ENCODE measurements at regions of chr17 and their contacts with region 1.

Region 1: GRCh38 chr17:35747540-35748017 is 5.5 kb downstream of the GAS2L2 start:
- DNase-seq: peak; percentile 79
- H3K4me3 ChIP-seq: no peak overlapping the region
- H3K27ac ChIP-seq: no peak overlapping the region
- H3K4me1 ChIP-seq: no peaks in the 10 kb centered on the region
- CTCF ChIP-seq: peak; percentile 90

Region 2: DNA sequence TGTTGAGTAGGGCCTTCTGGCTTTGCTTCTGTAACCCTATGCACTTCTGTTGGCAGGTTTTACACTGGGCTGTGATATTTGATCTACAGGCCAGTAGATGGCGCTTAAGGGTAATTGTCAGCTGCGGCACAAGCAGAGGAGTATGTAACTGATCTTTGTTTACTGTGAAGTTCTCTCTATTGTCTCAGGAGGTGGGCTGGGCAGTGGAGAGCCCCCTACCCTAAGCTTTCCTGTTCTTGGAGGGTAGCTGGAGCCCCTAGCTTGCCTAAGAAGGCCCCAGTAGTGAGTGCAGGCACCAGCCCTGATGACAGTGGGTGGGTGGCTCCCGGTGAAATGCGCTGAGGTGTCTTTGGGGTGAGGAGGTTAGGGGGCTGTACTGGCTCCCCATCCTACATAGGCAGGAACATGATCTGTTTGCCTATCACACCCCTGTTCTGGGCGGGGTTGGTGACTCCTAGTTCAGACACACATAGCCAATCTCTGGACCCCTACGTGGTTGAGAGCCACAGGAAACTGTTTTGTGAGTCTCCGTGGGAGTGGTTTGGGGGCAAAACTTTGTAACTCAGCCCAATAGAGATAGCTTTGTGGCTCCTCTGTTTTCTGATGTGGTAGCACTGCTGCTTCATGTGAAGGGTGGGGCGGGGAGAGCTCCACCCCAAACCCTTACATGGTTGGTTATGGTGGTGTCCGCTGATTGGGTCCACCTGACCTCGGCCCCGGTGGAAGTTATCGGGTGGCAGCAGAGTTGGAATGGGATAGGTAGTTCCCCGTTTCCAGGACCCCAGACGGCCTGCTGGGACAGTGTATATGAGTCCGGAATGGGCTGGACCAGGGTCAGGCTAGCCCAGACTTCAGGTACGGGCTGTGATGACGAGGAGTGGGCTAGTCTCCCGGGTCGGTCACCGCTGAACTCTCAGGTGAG is 434.5 kb before region 1 on chr17:
- CTCF ChIA-PET with region 1: no interaction called
- POLR2A ChIA-PET with region 1: no interaction called
- intact Hi-C with region 1: loop called (anchors 2 kb)
- DNase-seq: peak; percentile 66
- H3K4me3 ChIP-seq: no peak overlapping the region
- H3K27ac ChIP-seq: no peak overlapping the region
- H3K4me1 ChIP-seq: no peaks in the 10 kb centered on the region
- CTCF ChIP-seq: peak; percentile 90

Region 3: DNA sequence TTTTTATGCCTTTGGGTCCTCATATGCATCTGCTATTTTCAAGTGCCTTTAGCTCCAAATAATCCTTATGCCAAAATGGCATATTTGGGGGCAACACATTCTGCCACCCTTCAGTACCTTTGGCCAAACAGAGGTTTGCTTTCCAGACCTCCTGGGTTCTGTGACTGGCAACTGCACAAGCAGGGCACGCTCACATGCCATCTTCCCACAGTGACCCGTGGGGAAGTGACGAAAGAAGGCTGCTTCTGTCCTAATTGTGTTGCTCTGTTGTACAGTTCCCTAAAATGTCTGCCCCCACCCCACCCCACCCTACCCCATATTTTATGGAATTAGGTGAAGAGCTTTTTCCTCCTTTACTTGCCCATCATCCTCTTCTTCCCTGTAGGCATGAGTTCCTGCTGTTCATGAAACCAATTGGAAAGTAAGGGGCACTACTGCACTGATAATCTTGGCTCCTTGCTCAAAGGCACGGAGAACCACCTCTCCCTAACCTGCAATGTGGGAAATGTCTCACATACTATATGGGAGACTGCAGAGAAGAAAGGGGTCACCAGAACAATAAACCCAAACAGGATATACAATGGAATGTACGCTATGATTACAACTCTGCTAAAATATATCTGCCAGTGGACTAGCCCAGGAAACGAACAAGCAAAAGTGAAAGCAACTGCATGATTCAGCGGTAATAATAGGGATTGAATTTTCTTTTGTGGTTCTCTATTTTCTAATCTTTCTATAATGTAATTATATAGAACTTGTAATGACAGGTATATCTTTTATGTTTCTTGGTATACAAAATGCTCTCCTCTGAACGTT is 206.8 kb before region 1 on chr17:
- CTCF ChIA-PET with region 1: no interaction called
- POLR2A ChIA-PET with region 1: no interaction called
- intact Hi-C with region 1: loop called (anchors 5 kb)
- DNase-seq: peak; percentile 27
- H3K4me3 ChIP-seq: peak overlapping the region; percentile 64
- H3K27ac ChIP-seq: peak overlapping the region; percentile 25
- H3K4me1 ChIP-seq: peaks cover 19% of the 10 kb centered on the region
- CTCF ChIP-seq: no peak

Region 4: GRCh38 chr17:35555695-35556094 is 191.9 kb before region 1 on chr17:
- CTCF ChIA-PET with region 1: no interaction called
- POLR2A ChIA-PET with region 1: no interaction called
- intact Hi-C with region 1: loop called (anchors 1 kb)
- DNase-seq: no peak
- H3K4me3 ChIP-seq: no peak overlapping the region
- H3K27ac ChIP-seq: no peak overlapping the region
- H3K4me1 ChIP-seq: no peaks in the 10 kb centered on the region
- CTCF ChIP-seq: peak; percentile 63

Region 5: DNA sequence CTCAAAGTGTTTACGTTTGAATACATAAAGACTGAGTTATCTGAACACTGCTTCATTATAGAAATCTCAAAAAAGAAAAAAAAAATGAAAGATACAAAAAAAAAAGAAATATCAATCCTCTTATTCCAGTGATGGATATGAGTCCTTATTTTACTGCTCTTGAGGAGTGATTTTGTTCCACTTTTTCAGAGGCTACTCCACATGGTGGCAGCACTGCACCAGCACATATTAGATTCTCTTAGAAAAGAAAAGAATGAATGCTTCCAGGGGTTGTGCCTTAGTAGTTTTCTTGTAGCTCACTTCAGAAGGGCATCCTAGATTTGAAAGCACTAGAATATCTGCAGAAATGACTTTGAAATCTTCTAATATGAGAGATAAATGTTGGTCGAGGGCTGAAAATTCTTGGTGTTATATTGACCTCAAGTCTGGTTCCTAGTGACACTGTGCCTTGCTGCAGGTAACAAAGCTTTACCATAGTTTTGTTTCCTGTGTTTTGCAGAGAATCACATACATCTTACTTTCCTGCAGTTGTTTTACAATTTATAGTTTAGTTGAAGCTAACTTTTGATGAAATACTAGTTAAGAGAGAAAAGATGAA is 134.6 kb before region 1 on chr17:
- CTCF ChIA-PET with region 1: interaction called, 11 read pairs
- POLR2A ChIA-PET with region 1: interaction called, 4 read pairs
- intact Hi-C with region 1: loop called (anchors 1 kb)
- DNase-seq: peak; percentile 56
- H3K4me3 ChIP-seq: no peak overlapping the region
- H3K27ac ChIP-seq: no peak overlapping the region
- H3K4me1 ChIP-seq: peaks cover 5% of the 10 kb centered on the region
- CTCF ChIP-seq: peak; percentile 97

Region 6: GRCh38 chr17:35808962-35809854 is 61.6 kb after region 1 on chr17 and contains the start of gene TAF15:
- CTCF ChIA-PET with region 1: no interaction called
- POLR2A ChIA-PET with region 1: no interaction called
- intact Hi-C with region 1: no loop called
- DNase-seq: peak; percentile 98
- H3K4me3 ChIP-seq: peak within 1 kb of the TSS; percentile 91
- H3K27ac ChIP-seq: peak within 1 kb of the TSS; percentile 78
- H3K4me1 ChIP-seq: peaks cover 34% of the 10 kb centered on the region
- CTCF ChIP-seq: peak; percentile 91
- total RNA-seq, gene TAF15: 61.9 and 65.9 TPM in 2 replicates